HepG2 (cell line): ENCODE measurements at regions of chr7 and their contacts with region 1.

Region 1: DNA sequence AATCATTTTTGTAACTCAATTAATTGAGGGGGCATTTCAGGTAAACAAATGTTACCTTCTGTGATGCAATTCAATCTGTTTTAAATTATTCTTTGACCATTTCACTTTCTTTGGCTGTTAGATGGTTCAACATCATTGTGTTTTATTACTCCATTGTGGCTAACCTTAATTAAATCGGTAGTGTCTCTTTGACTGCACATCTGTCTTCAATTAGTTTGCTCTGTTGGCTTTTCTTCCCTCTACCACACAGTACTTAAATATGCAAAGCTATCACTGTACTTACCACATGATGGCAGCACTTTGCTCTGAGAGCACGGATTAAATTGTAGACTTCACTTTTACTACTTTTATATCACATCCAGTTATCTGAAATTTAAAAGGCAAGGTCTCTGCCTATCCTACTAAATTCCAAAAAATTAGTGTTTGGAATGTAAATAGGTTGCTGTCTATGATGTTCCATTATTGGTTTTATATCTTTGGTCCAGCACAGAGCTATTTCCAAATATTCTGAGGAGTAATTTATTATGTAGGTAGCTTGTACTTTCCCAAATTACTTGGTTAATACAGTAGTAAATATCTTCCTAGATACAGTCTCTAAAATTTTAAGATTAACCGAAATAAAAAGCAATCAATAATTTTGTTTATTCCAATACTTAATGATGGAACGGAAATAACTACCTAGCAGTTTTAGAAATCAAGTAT is 352.0 kb downstream of the PCLO start:
- DNase-seq: peak; percentile 18
- ATAC-seq: peak; percentile 81
- H3K4me3 ChIP-seq: no peak overlapping the region
- H3K27ac ChIP-seq: no peak overlapping the region
- H3K4me1 ChIP-seq: no peaks in the 10 kb centered on the region
- H3K27me3 ChIP-seq: no peaks in the 10 kb centered on the region
- CTCF ChIP-seq: peak; percentile 67
- EP300 ChIP-seq: no peak
- POLR2A ChIP-seq: no peak
- RAD21 ChIP-seq: no peak

Region 2: GRCh38 chr7:82972135-82972534 is 161.4 kb after region 1 on chr7:
- CTCF ChIA-PET with region 1: no interaction called
- POLR2A ChIA-PET with region 1: no interaction called
- in situ Hi-C with region 1: no loop called
- intact Hi-C with region 1: no loop called
- DNase-seq: no peak
- ATAC-seq: no peak
- H3K4me3 ChIP-seq: no peak overlapping the region
- H3K27ac ChIP-seq: no peak overlapping the region
- H3K4me1 ChIP-seq: no peaks in the 10 kb centered on the region
- H3K27me3 ChIP-seq: no peaks in the 10 kb centered on the region
- CTCF ChIP-seq: no peak
- EP300 ChIP-seq: no peak
- POLR2A ChIP-seq: no peak
- RAD21 ChIP-seq: no peak

Region 3: DNA sequence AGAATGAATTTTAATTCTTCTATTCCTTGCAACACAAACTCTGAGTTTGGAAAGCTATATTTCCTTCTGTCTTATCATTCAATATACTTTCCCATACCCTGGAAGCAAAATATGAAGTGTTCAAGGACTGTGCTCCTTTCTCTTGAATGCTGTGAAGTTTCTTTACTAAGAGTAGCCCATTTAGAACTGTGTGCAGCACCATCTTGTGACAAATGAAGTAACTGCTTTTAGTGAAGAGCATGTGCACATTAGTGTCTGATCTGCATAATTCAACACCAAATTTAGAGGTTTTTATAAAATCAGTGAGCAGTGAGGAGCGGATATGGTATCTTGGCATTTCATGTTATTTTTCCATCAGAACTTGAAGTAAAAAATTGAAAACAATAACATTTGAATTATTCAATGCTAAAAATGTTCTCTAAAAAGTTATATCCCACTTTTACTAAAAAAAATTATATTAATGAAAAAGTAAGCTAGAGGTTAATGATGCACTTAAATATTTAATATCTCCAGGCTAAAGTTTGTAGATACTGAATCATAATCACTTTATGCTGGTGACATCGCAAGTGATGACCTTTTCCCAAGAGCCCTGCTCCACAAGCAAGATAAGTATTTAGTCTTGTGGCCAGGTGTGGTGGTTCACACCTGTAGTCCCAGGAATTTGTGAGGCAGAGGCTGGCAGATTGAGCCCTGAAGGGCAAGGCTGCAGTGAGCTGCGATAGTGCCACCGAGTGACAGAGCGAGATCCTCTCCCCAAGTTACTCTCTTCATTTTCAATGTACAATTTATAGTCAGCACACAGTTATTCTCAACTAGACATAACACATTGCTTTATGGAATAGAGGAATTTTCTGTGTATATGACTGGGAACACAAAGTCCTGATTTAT is 460.7 kb after region 1 on chr7:
- CTCF ChIA-PET with region 1: no interaction called
- POLR2A ChIA-PET with region 1: no interaction called
- in situ Hi-C with region 1: loop called (anchors 5 kb)
- intact Hi-C with region 1: loop called (anchors 1 kb)
- DNase-seq: peak; percentile 1
- ATAC-seq: peak; percentile 66; the same call in 2 of the 3 replicates
- H3K4me3 ChIP-seq: no peak overlapping the region
- H3K27ac ChIP-seq: no peak overlapping the region
- H3K4me1 ChIP-seq: no peaks in the 10 kb centered on the region
- H3K27me3 ChIP-seq: no peaks in the 10 kb centered on the region
- CTCF ChIP-seq: 0 out of 2 replicates have a peak, but pooled peaks have one; percentile 34
- EP300 ChIP-seq: no peak
- POLR2A ChIP-seq: no peak
- RAD21 ChIP-seq: no peak